Activated T-helper 2 cell treated with anti-CD3 and anti-CD28 coated beads, Interferon-gamma antibody, Interleukin-2, Interleukin-4, amounts not matched to agents 10 μg/mL and 5 μg/mL and 100 μg/mL, durations not matched to agents 14 hours and 24 hours and 36 hours (primary cell): ENCODE measurements at regions of chr18 and their contacts with region 1.

Region 1: DNA sequence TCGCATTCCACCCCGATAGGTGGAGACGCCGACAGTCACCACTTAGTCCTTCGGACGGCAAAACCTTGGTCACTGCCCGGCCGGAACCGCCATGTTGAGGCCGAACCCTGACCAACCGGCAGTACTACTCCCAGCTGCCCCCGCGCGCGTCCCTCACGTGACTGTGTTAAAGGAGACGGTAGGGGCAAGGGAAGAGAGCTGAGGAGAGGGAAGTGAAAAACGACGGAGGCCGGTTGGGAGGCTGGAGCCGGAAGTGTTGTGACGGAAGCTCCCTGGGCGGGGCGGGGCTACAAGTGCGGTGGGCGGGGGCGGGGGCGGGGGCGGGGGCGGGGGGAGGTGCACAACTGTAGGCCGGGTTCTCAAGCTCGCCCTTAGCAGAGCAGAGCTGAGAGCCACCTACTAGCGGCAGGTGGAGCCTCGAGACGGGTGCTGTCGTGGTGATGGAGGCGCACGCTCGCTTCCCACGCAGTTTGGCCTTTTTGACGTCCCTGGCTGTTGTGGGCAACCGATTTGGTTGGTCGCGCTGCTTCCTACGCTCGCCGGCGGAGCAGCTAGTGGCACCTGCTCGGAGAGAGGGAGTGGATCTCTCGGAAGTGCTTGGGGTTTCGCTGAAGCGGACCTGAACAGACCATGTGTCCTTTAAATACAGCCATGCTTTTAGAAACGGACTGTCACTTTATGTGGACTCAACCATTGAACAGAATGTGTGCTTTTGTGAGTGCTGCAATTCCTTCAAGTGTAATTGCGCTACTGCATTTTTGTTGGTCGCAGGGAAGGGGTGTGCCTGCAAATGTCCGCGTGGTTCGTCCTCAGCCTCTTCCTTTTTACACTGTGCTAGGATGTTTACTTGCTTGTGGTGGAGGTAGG is at the start of gene TRAPPC8:
- DNase-seq: peak; percentile 89
- H3K4me3 Mint-ChIP-seq: peak within 1 kb of the TSS; percentile 100
- H3K27ac Mint-ChIP-seq: peak within 1 kb of the TSS; percentile 99
- H3K4me1 Mint-ChIP-seq: peaks cover 41% of the 10 kb centered on the region
- H3K27me3 Mint-ChIP-seq: no peaks in the 10 kb centered on the region
- total RNA-seq, gene TRAPPC8: 41.3 and 46.4 TPM in 2 replicates

Region 2: GRCh38 chr18:31658670-31659575 is 284.3 kb before region 1 on chr18:
- intact Hi-C with region 1: loop called (anchors 5 kb)
- DNase-seq: no peak
- H3K4me3 Mint-ChIP-seq: peak overlapping the region; percentile 24
- H3K27ac Mint-ChIP-seq: peak overlapping the region; percentile 72
- H3K4me1 Mint-ChIP-seq: peaks cover 21% of the 10 kb centered on the region
- H3K27me3 Mint-ChIP-seq: peaks cover 6% of the 10 kb centered on the region

Region 3: GRCh38 chr18:32018331-32019250 is 75.4 kb after region 1 on chr18 and contains the start of gene RNF125:
- intact Hi-C with region 1: loop called (anchors 1 kb)
- DNase-seq: peak; percentile 94
- H3K4me3 Mint-ChIP-seq: peak within 1 kb of the TSS; percentile 97
- H3K27ac Mint-ChIP-seq: peak within 1 kb of the TSS; percentile 96
- H3K4me1 Mint-ChIP-seq: peaks cover 32% of the 10 kb centered on the region
- H3K27me3 Mint-ChIP-seq: no peaks in the 10 kb centered on the region
- total RNA-seq, gene RNF125: 82.5 and 83.6 TPM in 2 replicates

Region 4: GRCh38 chr18:32040936-32041335 is 97.7 kb after region 1 on chr18:
- intact Hi-C with region 1: loop called (anchors 2 kb)
- DNase-seq: peak; percentile 66
- H3K4me3 Mint-ChIP-seq: peak overlapping the region; percentile 64
- H3K27ac Mint-ChIP-seq: peak overlapping the region; percentile 91
- H3K4me1 Mint-ChIP-seq: peaks cover 61% of the 10 kb centered on the region
- H3K27me3 Mint-ChIP-seq: no peaks in the 10 kb centered on the region

Region 5: DNA sequence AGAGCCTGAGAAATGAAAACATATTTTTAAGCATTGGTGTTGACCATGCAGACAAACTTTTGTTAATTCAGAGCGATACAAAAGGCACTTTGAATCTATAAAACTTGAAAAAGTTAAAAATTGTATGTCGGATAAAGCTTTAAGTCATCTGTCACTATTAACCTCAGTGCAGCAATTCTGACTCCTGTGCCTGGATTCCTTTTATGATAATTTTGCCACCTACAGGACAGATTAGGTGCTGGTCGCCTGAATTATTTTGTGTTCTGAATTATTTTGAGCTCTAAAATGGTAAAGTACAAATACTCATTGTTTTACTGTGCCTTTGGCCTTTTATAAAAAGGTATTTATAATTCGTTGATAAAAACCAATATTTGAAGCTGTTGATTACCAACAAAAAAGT is 129.1 kb after region 1 on chr18:
- intact Hi-C with region 1: loop called (anchors 1 kb)
- DNase-seq: no peak
- H3K4me3 Mint-ChIP-seq: no peak overlapping the region
- H3K27ac Mint-ChIP-seq: no peak overlapping the region
- H3K4me1 Mint-ChIP-seq: peaks cover 45% of the 10 kb centered on the region
- H3K27me3 Mint-ChIP-seq: no peaks in the 10 kb centered on the region

Region 6: DNA sequence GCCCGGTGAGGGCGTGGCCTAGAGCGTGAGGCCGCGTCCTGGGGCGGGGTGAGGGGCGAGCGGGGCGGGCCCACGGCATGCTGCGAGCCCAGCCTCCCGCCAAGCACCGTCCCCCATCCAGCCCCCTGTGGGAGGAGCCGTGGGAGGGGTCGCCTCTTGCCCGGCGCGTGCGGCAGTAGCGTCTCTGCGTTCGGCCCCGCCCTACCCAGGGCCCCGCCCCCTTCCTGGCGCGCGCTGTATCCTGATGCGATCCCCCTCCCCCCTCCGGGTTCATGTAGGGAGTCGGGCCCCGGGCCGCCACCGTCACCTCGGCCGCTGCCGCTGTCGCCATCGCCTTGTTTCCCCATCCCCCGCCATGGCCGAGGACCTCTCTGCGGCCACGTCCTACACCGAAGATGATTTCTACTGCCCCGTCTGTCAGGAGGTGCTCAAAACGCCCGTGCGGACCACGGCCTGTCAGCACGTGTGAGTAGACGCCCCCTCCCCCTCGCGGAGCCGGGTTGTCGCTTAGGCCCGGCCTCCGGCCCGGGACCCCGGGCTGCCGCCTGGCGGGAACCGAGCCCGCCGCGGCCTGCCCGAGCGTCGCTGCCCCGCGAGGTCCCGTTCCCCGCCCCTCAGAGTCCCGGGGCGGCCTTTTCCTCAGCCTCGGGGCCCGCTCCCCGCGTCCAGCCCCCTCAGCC is 149.3 kb after region 1 on chr18:
- intact Hi-C with region 1: loop called (anchors 1 kb)
- DNase-seq: peak; percentile 98
- H3K4me3 Mint-ChIP-seq: peak overlapping the region; percentile 94
- H3K27ac Mint-ChIP-seq: peak overlapping the region; percentile 93
- H3K4me1 Mint-ChIP-seq: peaks cover 40% of the 10 kb centered on the region
- H3K27me3 Mint-ChIP-seq: no peaks in the 10 kb centered on the region

Region 7: DNA sequence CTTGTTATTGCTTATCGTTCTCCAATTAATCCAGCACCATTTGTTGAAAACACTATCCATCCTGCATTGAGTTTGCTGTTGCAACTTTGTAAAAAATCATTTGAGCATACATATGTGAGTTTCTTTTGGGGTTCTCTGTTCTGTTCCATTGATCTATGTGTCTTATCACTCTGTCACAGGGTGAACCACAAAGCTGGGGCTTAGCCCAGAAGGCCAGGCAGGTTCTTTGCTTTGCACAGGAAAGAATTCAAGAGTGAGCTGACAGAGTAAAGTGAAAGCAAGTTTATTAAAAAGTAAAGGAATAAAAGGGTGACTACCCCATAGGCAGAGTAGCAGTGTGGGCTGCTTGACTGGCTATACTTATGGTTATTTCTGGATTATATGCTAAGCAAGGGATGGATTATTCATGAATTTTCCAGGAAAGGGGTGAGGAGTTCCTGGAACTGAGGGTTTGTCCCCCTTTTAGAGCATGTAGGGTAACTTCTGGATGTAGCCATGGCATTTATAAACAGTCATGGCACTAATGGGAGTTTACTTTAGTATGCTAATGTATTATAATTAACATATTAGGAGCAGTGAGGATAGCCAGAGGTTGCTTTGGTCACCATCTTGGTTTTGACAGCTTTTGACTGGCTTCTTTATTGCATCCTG is 195.2 kb after region 1 on chr18:
- intact Hi-C with region 1: loop called (anchors 5 kb)
- DNase-seq: no peak
- H3K4me3 Mint-ChIP-seq: no peak overlapping the region
- H3K27ac Mint-ChIP-seq: no peak overlapping the region
- H3K4me1 Mint-ChIP-seq: peaks cover 9% of the 10 kb centered on the region
- H3K27me3 Mint-ChIP-seq: no peaks in the 10 kb centered on the region